ENCODE measurements at regions of chr7 and their contacts with region 1.

Region 1: GRCh38 chr7:36967387-36967786 is 243.1 kb upstream of the AOAH start:
- DNase-seq: peak; percentile 79
- ATAC-seq: peak; percentile 73
- H3K4me3 ChIP-seq: no peak overlapping the region
- H3K27ac ChIP-seq: no peak overlapping the region
- H3K4me1 ChIP-seq: peaks cover 41% of the 10 kb centered on the region
- H3K27me3 ChIP-seq: no peaks in the 10 kb centered on the region
- CTCF ChIP-seq: peak; percentile 90
- EP300 ChIP-seq: no peak
- POLR2A ChIP-seq: no peak
- RAD21 ChIP-seq: peak; percentile 94

Region 2: DNA sequence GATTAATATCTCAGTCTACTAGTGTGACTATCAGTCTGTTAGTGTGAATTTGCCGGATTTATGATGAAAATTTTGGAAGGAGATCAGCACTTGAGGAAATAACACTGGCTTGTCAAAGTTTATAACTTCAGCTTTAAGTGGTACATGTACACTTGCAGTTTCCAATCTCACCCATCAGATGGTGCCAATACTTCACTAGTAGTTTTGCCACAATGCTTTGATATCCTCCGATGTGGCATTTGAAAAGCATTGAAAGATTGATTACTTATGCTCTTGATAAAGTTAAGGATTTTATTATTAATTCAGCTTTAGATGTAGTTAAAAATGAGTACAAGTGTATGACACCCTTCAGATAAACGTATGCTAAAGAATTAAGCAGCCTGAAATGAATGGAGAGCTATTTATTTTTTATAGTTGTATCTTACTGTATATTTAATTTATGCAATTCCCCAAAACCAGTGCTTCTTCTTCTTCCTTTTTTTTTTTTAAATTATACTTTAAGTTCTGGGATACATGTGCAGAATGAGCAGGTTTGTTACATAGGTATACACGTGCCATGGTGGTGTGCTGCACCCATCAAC is 479.5 kb before region 1 on chr7:
- CTCF ChIA-PET with region 1: no interaction called
- POLR2A ChIA-PET with region 1: no interaction called
- in situ Hi-C with region 1: no loop called
- intact Hi-C with region 1: loop called (anchors 5 kb)
- DNase-seq: peak; percentile 39
- ATAC-seq: peak; percentile 26; the same call in 1 of the 3 replicates
- H3K4me3 ChIP-seq: no peak overlapping the region
- H3K27ac ChIP-seq: no peak overlapping the region
- H3K4me1 ChIP-seq: no peaks in the 10 kb centered on the region
- H3K27me3 ChIP-seq: no peaks in the 10 kb centered on the region
- CTCF ChIP-seq: peak; percentile 80
- EP300 ChIP-seq: no peak
- POLR2A ChIP-seq: no peak
- RAD21 ChIP-seq: peak; percentile 78

Region 3: GRCh38 chr7:36755484-36755883 is 211.9 kb before region 1 on chr7:
- CTCF ChIA-PET with region 1: no interaction called
- POLR2A ChIA-PET with region 1: no interaction called
- in situ Hi-C with region 1: no loop called
- intact Hi-C with region 1: no loop called
- DNase-seq: no peak
- ATAC-seq: no peak
- H3K4me3 ChIP-seq: no peak overlapping the region
- H3K27ac ChIP-seq: no peak overlapping the region
- H3K4me1 ChIP-seq: no peaks in the 10 kb centered on the region
- H3K27me3 ChIP-seq: peaks cover 0 to 6% of the 10 kb centered on the region in 2 experiments; a peak in 1 of 5 replicates
- CTCF ChIP-seq: no peak
- EP300 ChIP-seq: no peak
- POLR2A ChIP-seq: no peak
- RAD21 ChIP-seq: no peak

Region 4: GRCh38 chr7:36904802-36905201 is 62.6 kb before region 1 on chr7:
- CTCF ChIA-PET with region 1: no interaction called
- POLR2A ChIA-PET with region 1: no interaction called
- in situ Hi-C with region 1: no loop called
- intact Hi-C with region 1: no loop called
- DNase-seq: no peak
- ATAC-seq: no peak
- H3K4me3 ChIP-seq: no peak overlapping the region
- H3K27ac ChIP-seq: no peak overlapping the region
- H3K4me1 ChIP-seq: peaks cover 20% of the 10 kb centered on the region
- H3K27me3 ChIP-seq: no peaks in the 10 kb centered on the region; a peak in 2 of 5 replicates
- CTCF ChIP-seq: no peak
- EP300 ChIP-seq: no peak
- POLR2A ChIP-seq: no peak
- RAD21 ChIP-seq: no peak

Region 5: DNA sequence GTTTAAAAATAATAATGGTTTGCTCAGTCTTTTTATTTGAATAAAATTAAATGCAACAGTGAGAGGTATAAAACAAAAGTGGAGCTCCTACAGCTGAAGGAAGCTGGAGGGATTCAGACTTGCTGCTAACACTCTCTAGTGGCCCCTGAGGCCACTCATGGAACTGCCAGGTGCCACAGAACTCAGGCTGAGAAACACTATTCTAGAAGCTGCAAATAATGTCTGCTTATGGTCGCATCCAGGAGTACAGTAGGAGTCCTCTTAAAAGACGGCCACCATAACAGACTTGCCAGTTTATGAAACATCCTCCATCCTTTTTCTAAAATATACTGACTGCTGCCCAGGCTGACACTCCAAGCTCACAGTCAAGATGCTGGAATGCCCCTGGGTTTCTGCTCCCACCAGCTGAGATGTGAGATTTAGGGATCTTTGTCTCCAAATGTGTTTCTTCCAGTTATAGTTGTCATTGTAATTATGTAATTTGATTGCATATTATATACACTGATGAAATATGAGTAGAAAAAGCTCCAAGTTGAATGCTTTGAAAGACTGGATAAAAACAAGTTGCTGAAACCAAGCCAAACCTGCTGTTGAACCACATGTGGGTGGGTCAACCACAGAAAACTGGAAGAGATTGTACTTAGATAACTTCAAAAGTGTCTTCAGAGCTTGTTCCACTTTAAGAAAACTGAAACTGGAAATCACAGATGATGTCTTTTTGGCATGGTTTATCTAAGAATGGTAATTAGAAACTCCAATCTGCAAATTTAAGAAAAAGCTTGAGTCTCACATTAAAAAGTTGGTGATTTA is 29.4 kb before region 1 on chr7:
- CTCF ChIA-PET with region 1: no interaction called
- POLR2A ChIA-PET with region 1: no interaction called
- in situ Hi-C with region 1: no loop called
- intact Hi-C with region 1: no loop called
- DNase-seq: no peak
- ATAC-seq: peak; percentile 80
- H3K4me3 ChIP-seq: no peak overlapping the region
- H3K27ac ChIP-seq: no peak overlapping the region
- H3K4me1 ChIP-seq: peaks cover 15% of the 10 kb centered on the region
- H3K27me3 ChIP-seq: peaks cover 0 to 3% of the 10 kb centered on the region in 2 experiments; a peak in 1 of 5 replicates
- CTCF ChIP-seq: no peak
- EP300 ChIP-seq: no peak
- POLR2A ChIP-seq: no peak
- RAD21 ChIP-seq: no peak

Region 6: DNA sequence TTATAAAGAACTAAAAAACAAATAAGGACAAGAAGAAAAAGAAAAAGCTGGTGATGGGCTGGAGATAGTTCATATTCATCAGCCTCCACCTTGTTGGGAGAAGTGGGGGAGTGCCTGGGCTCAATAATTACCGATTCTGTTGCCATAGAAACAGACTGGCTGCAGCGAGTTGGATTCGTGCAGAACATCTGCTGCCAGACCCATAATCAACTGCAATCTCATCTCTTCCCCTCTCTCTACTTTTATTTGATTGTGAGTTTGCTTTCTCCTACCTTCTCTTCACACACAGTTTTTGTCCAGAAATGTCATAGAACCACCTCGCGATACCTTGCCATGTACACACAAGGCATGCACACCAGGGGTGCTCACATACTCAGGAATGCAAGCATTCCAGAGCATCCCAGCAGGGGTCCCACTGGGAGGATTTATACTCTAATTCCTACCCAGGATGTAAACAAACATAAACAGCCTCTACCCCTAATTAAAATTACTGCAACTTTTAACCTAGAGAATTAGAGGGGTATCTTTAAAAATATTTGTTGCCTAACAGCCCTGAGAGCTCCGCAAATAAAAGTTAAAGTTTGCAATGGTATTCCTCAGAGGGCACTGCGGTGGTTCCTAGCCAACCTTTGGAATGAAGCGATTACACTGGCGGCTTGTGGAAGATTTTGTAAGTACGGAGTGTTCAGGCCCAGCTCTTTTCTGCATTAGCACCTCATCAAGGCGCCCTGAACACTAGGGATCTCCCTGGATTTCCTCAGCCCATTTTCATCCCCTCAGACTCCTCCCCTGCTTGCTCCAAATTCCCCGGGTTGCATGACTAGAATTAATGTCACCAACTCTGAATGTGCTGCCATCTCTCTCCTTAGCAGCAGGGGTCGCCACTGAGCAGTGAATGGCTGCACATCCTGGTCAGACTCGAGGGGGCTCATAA is 19.3 kb after region 1 on chr7:
- CTCF ChIA-PET with region 1: interaction called, 6 read pairs
- POLR2A ChIA-PET with region 1: interaction called, 112 read pairs
- in situ Hi-C with region 1: no loop called
- intact Hi-C with region 1: loop called (anchors 1 kb)
- DNase-seq: peak; percentile 36
- ATAC-seq: peak; percentile 68
- H3K4me3 ChIP-seq: no peak overlapping the region
- H3K27ac ChIP-seq: no peak overlapping the region
- H3K4me1 ChIP-seq: peaks cover 43% of the 10 kb centered on the region
- H3K27me3 ChIP-seq: no peaks in the 10 kb centered on the region
- CTCF ChIP-seq: peak; percentile 89
- EP300 ChIP-seq: no peak
- POLR2A ChIP-seq: no peak
- RAD21 ChIP-seq: peak; percentile 68

Region 7: DNA sequence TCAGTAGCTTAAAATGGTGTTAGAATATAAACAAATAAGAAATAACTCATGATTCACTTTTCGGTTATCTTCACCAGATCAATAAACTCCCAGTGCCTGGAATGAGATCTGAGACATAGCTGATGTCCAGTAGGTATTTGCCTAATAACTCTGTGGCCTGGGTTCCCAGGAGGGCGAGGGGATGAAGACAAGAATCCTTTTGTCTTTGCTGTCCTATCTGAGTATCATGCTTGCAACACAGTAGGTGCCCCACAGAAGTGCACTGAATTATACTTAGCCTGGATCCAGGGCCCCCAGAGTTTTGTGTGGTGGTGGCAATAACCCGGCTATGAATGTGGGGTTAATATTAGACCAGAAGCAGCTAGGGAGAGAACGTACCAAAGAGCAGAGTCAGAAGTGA is 107.0 kb after region 1 on chr7:
- CTCF ChIA-PET with region 1: no interaction called
- POLR2A ChIA-PET with region 1: interaction called, 20 read pairs
- in situ Hi-C with region 1: no loop called
- intact Hi-C with region 1: loop called (anchors 1 kb)
- DNase-seq: peak; percentile 99
- ATAC-seq: peak; percentile 100
- H3K4me3 ChIP-seq: peak overlapping the region in 1 of 3 experiments; percentile 35; a peak in 1 of 6 replicates
- H3K27ac ChIP-seq: peak overlapping the region; percentile 82
- H3K4me1 ChIP-seq: peaks cover 30% of the 10 kb centered on the region
- H3K27me3 ChIP-seq: no peaks in the 10 kb centered on the region
- CTCF ChIP-seq: no peak
- EP300 ChIP-seq: peak; percentile 54 to 94; a peak in 3 of 4 replicates
- POLR2A ChIP-seq: no peak
- RAD21 ChIP-seq: no peak; the same call in 1 of the 2 replicates

Region 8: GRCh38 chr7:37181550-37181932 is 214.2 kb after region 1 on chr7:
- CTCF ChIA-PET with region 1: interaction called, 52 read pairs
- POLR2A ChIA-PET with region 1: interaction called, 31 read pairs
- in situ Hi-C with region 1: no loop called
- intact Hi-C with region 1: loop called (anchors 1 kb)
- DNase-seq: no peak
- ATAC-seq: no peak
- H3K4me3 ChIP-seq: no peak overlapping the region
- H3K27ac ChIP-seq: no peak overlapping the region
- H3K4me1 ChIP-seq: peaks cover 41% of the 10 kb centered on the region
- H3K27me3 ChIP-seq: no peaks in the 10 kb centered on the region
- CTCF ChIP-seq: no peak
- EP300 ChIP-seq: no peak
- POLR2A ChIP-seq: no peak
- RAD21 ChIP-seq: no peak

Region 9: DNA sequence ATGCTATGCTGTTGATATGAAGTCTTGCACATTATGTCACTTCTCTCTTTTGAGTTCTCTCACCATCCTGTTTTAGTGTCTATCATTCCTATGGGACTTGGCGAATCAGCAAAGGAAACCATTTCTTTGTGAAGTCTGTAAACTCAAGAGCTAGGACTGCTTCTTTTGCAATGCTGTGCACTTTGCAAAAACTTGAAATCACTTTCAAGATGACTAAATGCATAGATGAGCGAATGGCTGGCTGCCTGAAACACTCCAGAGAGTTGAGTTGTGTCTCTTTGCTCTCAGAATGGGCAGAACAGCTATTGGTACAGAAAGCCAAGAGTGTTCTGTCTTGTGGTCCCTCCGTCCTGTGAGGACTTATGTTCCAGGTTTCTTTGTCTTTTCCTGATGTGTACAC is 499.6 kb after region 1 on chr7:
- CTCF ChIA-PET with region 1: no interaction called
- POLR2A ChIA-PET with region 1: no interaction called
- in situ Hi-C with region 1: no loop called
- intact Hi-C with region 1: no loop called
- DNase-seq: no peak
- ATAC-seq: no peak
- H3K4me3 ChIP-seq: no peak overlapping the region
- H3K27ac ChIP-seq: no peak overlapping the region
- H3K4me1 ChIP-seq: no peaks in the 10 kb centered on the region
- H3K27me3 ChIP-seq: no peaks in the 10 kb centered on the region
- CTCF ChIP-seq: no peak
- EP300 ChIP-seq: no peak
- POLR2A ChIP-seq: no peak
- RAD21 ChIP-seq: no peak